Posterior vena cava (tissue), 2 donors: ENCODE measurements at regions of chr1 and their contacts with region 1.

Region 1: GRCh38 chr1:209723756-209724693 is 19.4 kb downstream of the HSD11B1 start:
- DNase-seq: no peak

Region 2: GRCh38 chr1:208515129-208515528 is 1208.9 kb before region 1 on chr1:
- intact Hi-C with region 1: loop called in 1 of 2 experiments (anchors 5 kb)
- DNase-seq: no peak